PC-9 (cell line): ENCODE measurements at regions of chr1 and their contacts with region 1.

Region 1: DNA sequence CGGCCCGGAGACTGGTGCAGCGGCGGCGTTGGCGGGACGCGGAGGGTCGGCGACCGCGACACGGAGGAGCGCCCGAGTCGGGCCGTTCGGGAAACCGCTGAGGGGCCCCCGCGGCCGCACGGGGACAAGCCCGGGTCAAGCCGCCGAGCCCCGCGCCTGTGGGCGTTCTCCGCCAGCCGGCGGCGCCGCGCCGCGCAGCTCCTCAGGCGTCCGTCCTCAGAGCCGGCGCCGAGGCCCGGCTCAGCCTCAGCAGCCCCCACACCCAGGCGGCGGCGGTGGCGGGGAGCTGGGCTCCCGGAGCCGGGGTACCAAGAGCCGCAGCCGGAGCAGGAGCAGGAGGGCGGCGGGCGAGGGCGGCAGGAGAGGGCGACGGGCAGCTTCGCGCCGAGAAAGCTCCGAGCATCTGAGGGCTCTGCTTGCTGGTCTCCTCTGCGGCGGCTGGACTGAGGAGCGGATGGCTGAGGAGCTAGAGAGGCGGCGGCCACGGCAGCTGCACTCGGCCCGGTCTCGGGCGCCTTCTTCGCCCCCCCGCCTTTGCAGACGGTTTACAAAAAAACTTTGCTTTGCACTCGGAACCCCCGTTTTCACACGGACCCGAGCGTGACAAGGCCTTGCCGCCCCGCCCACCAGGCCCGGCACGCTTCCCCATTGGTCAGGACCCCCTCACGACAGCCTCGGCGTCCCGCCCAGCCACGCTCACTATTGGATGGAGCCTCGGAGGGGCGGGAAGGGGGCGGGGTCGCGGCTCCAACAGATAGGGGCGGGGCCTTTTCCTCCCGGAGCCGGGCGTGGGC is at the start of gene SLC30A1:
- DNase-seq: peak; percentile 89 to 99
- H3K4me3 ChIP-seq: peak within 1 kb of the TSS; percentile 77
- H3K27ac ChIP-seq: peak within 1 kb of the TSS; percentile 67
- H3K4me1 ChIP-seq: peaks cover 36% of the 10 kb centered on the region
- H3K27me3 ChIP-seq: no peaks in the 10 kb centered on the region
- CTCF ChIP-seq: no peak
- total RNA-seq, gene SLC30A1: 26.8 and 27.6 TPM in 2 replicates

Region 2: DNA sequence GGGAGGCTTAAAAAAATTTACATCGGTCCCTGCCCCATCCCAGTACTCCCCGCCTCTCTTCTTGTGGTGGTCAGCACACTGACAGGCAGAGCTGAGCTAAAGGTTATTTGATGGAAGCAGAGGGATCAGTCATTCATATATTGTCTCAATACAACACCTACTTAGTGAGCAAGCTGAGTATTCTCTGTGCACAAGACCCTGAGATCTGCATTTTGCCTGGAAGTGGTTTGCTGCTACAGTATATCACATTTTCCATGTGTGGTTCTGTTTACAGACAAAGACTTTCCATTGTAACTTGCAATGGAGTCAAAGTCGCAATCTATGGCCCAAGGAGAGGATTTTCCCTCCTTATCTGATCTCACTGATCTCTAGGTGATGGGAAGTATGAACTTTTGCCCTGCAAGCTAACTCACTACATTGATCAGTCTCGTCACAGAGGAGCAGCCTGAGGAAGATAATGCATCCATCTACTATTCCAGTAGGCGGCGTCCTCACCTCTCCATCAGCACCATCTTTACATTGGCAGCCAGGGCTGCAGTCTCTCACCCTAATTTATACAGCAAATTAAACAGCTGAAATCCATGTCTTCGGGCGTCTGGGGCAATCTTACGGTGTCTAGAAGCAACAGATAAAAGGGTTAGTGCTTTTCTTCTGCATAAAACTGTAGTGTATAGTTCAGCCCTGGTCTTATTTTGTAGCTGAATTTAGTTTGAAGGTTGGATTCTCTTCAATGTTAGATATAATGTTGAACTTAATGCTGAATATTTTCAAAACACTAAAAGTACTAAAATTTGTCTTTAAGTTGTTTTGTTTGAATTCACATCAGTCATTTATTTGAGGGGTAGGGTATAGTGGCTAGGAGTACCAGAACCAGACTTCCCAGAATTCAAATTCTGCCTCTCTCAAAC is 255.4 kb before region 1 on chr1:
- CTCF ChIA-PET with region 1: no interaction called
- POLR2A ChIA-PET with region 1: no interaction called
- intact Hi-C with region 1: loop called (anchors 5 kb)
- DNase-seq: peak in 1 of 2 experiments; percentile 59
- H3K4me3 ChIP-seq: no peak overlapping the region
- H3K27ac ChIP-seq: no peak overlapping the region
- H3K4me1 ChIP-seq: peaks cover 9% of the 10 kb centered on the region
- H3K27me3 ChIP-seq: no peaks in the 10 kb centered on the region
- CTCF ChIP-seq: peak; percentile 89

Region 3: GRCh38 chr1:211527006-211527405 is 51.8 kb before region 1 on chr1:
- CTCF ChIA-PET with region 1: no interaction called
- POLR2A ChIA-PET with region 1: no interaction called
- intact Hi-C with region 1: no loop called
- DNase-seq: no peak
- H3K4me3 ChIP-seq: no peak overlapping the region
- H3K27ac ChIP-seq: no peak overlapping the region
- H3K4me1 ChIP-seq: peaks cover 14% of the 10 kb centered on the region
- H3K27me3 ChIP-seq: no peaks in the 10 kb centered on the region
- CTCF ChIP-seq: no peak

Region 4: DNA sequence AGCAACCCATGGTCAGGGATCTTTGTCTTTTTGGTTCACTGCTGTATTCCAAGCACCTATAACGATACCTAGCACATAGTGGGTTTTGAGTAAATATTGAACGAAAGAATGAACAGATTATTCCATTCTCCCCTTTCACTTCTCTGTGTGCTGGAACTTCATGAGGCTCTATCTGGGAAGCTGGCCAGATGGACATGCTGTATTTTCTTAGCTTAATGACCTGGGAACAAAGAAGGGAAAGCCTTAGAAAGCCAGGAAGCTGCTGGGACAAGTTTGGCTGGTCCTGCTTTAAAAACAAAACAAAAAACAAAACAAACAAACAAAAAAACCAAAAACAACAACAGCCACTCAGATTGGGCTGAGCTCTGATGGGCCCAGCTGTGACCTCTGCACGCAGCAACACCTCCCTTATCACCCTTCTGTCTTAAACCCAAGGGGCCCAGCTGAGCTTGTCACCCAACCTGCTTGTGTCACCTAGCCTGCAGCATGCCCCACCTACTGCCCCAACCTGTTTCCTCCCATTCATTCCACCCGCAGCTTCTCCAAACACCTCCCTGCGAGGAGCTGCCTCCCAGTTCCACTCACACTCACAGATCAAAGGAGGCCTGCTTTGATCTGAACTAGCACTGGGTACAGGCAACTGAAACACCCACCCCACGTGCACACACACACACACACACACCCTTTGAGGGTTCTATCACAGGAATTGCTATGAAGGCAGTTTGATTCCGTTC is 37.0 kb before region 1 on chr1:
- CTCF ChIA-PET with region 1: interaction called, 7 read pairs
- POLR2A ChIA-PET with region 1: no interaction called
- intact Hi-C with region 1: loop called (anchors 5 kb)
- DNase-seq: peak; percentile 84 to 87
- H3K4me3 ChIP-seq: peak overlapping the region; percentile 3; the same call in 1 of the 2 replicates
- H3K27ac ChIP-seq: peak overlapping the region; percentile 61
- H3K4me1 ChIP-seq: peaks cover 48% of the 10 kb centered on the region
- H3K27me3 ChIP-seq: no peaks in the 10 kb centered on the region
- CTCF ChIP-seq: no peak

Region 5: GRCh38 chr1:211557894-211558625 is 20.8 kb before region 1 on chr1:
- CTCF ChIA-PET with region 1: no interaction called
- POLR2A ChIA-PET with region 1: no interaction called
- intact Hi-C with region 1: no loop called
- DNase-seq: no peak
- H3K4me3 ChIP-seq: no peak overlapping the region
- H3K27ac ChIP-seq: no peak overlapping the region
- H3K4me1 ChIP-seq: peaks cover 32% of the 10 kb centered on the region
- H3K27me3 ChIP-seq: no peaks in the 10 kb centered on the region
- CTCF ChIP-seq: no peak

Region 6: DNA sequence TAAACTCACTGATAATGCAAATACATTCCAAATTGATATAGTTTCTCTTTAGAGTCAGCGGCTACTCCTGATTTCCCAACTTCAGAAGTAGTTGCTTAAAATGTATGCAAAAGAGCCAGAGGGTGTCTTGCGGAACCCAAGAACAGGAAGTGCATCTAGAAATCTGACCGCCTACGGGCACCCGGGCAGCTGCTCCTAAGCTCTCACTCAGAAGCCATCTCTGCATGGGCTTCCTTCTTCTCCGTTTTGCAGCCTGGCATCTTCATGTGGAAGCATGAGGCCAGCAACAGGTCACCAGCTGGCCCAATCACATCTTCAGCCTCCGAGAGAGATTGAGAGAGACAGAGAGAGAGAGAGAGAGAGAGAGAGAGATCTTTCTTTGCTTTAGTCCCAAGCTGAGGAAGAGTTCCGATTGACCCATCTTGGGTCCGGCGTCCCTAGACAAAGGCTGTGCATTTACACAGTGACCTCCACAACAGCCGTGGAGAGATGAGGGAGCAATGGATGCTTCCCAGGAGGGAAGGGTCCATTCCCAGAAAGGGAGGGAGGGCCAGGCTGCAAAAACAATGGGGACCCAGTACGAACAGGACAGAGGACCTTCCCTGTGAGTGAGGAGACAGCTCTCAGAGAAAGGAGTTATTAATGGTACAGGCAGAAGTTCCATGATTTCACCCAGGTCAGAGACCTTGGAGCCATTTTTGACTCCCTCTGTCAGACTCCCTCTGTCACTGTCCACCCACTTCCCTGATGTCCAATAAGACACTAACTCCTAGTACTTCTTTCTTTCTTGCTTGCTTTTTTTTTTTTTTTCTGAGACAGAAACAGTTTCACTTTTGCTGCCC is 28.3 kb after region 1 on chr1:
- CTCF ChIA-PET with region 1: no interaction called
- POLR2A ChIA-PET with region 1: interaction called, 7 read pairs
- intact Hi-C with region 1: loop called (anchors 1 kb)
- DNase-seq: peak in 1 of 2 experiments; percentile 81
- H3K4me3 ChIP-seq: peak overlapping the region; percentile 62
- H3K27ac ChIP-seq: peak overlapping the region; percentile 84
- H3K4me1 ChIP-seq: peaks cover 47% of the 10 kb centered on the region
- H3K27me3 ChIP-seq: no peaks in the 10 kb centered on the region
- CTCF ChIP-seq: no peak

Region 7: DNA sequence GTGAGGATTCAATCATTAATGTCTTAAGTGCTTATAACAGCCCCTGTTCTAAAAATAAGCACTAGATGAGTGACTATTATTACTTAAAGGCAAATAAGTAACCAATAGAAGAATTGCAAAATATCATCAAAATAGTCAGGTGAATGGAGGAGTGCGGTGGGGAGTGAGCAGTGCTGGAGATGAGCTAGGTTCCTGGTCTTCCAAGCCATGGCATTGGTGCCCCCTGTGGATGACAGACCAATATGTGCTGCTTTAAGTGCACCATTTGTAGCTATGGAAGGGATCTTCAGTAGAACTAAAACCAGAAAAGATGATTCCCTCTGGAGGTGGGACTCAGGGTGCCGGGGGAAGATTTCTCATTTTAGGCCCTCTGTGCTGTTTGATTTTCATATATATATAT is 46.2 kb after region 1 on chr1:
- CTCF ChIA-PET with region 1: interaction called, 5 read pairs
- POLR2A ChIA-PET with region 1: interaction called, 6 read pairs
- intact Hi-C with region 1: loop called (anchors 1 kb)
- DNase-seq: no peak
- H3K4me3 ChIP-seq: no peak overlapping the region
- H3K27ac ChIP-seq: no peak overlapping the region
- H3K4me1 ChIP-seq: no peaks in the 10 kb centered on the region
- H3K27me3 ChIP-seq: no peaks in the 10 kb centered on the region
- CTCF ChIP-seq: no peak; the same call in 1 of the 2 replicates

Region 8: DNA sequence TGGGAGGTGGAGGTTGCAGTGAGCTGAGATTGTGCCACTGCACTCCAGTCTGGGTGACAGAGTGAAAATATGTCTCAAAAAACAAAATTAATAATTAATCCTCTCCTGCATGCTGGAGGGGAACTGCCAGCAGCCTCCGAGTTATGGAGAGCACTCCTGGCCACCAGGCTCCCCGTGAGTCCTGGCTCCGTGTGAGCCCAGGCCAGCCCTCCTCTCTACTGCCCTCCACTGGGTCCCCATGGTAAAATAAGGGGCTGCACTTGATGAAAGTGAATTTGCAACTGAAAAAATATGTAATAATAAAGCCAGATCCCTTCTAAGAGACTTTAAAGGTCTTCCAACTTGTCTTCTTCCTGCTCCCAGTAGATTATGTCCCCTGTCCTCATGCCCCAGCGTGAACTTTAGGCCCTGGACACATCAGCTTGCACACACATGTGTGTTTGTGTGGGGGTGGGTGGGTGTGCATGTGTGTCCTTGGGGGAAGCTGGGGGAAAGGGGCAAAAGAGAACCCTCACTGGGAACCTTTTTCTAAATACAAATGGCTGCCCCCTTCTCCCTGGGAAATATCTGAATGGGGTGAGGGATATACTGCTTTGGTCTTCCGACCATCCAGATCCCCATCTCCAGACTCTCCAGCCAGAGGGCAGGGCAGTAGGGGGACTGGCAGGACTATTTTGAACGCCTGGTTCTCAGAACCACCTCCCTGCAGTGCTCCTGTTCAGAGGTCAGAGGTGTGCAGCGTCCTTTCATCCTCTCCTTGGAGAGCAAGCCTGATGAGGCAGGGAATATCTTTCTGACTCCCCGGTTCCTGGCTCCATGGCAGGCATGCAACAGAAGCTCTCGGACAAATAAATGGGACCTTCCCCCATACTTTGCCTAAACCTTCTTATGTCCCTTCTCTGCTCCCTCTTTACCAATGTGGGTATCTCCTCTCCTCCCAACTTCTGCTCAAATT is 70.4 kb after region 1 on chr1:
- CTCF ChIA-PET with region 1: no interaction called
- POLR2A ChIA-PET with region 1: no interaction called
- intact Hi-C with region 1: loop called (anchors 1 kb)
- DNase-seq: peak in 1 of 2 experiments; percentile 44
- H3K4me3 ChIP-seq: no peak overlapping the region
- H3K27ac ChIP-seq: peak overlapping the region; percentile 90
- H3K4me1 ChIP-seq: peaks cover 83% of the 10 kb centered on the region
- H3K27me3 ChIP-seq: no peaks in the 10 kb centered on the region
- CTCF ChIP-seq: peak; percentile 55

Region 9: DNA sequence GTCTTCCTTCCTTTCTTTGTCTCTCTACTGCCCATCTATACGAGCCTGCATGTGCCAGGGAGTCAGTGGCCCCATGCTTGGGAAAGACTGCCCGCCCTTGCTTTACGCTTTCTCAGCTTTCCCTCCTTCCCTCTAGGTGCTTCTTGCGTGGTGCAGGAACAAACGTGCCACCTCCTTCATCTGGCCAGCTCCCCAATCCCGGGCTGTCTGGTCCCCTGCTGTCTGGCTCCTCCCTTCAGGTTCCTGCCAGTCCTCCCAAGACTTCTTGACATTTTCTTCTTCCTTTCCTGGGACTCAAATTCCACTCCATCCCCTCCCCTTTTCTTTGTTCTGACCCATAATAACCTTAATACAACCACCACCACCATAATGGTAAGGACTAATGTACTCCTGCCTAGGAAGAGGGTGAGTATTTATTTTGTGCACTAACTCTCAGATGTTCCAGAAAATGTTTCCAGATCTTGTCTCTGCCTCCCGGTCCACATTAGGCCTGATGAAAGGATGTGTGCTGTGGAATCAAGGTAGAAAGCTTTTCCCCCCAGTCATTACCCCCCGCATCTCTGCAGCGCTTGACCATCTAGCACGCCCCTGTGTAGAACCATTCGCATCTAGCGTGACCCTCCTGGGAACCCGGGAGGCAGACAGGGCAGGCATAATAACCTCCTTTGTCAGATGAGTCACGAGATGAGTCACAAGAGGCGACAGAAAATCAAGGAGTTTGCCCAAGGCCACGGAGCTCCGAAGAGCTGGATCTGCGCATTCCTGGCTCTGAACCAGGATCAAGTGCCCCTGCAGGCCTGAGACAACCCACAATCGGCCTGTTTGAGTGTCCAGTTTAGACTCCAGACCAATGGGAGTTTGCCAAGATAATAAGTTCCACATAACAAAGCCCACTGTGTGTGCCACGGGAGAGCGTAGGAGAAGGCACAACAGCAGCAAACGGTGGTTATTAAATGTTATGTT is 156.7 kb after region 1 on chr1:
- CTCF ChIA-PET with region 1: no interaction called
- POLR2A ChIA-PET with region 1: no interaction called
- intact Hi-C with region 1: loop called (anchors 10 kb)
- DNase-seq: peak; percentile 89 to 95
- H3K4me3 ChIP-seq: peak overlapping the region; percentile 24; the same call in 1 of the 2 replicates
- H3K27ac ChIP-seq: peak overlapping the region; percentile 72
- H3K4me1 ChIP-seq: peaks cover 45% of the 10 kb centered on the region
- H3K27me3 ChIP-seq: no peaks in the 10 kb centered on the region
- CTCF ChIP-seq: no peak

Region 10: DNA sequence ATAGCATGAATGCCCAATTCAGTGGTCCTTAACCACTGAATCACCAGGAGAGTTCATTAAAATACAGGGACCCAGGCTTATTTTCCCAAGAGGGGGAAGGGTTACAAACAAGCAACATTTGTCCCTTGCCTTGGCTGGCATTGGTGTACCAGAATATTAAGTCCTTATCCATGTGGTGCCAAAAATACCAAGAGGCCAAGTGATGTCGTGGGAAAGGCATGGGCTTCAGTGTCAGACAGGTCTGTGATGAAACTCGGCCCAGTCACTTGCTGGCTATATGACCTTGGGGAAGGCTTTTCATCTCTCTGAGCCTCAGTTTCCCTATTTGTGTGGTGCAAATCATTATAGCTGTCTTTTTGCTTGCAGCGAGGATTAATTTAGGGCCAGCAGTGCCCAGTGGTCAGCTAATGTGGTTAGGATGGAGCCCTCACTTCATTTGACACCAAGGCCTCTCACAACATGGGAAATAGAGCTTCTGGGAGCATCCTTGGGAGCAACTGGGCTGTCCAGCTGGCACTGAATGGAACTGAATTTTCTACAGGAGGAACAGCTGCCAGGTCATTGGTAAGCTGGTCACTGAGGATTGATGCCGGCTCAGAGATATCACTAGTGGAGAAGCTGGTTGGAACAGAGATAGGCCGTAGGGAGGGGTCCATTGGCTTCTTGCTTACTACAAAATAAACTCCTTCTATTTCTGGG is 629.1 kb after region 1 on chr1:
- CTCF ChIA-PET with region 1: no interaction called
- POLR2A ChIA-PET with region 1: no interaction called
- intact Hi-C with region 1: no loop called
- DNase-seq: no peak
- H3K4me3 ChIP-seq: no peak overlapping the region
- H3K27ac ChIP-seq: no peak overlapping the region
- H3K4me1 ChIP-seq: no peaks in the 10 kb centered on the region
- H3K27me3 ChIP-seq: no peaks in the 10 kb centered on the region
- CTCF ChIP-seq: no peak